ENCODE measurements at regions of chr16 and their contacts with region 1.

Region 1: DNA sequence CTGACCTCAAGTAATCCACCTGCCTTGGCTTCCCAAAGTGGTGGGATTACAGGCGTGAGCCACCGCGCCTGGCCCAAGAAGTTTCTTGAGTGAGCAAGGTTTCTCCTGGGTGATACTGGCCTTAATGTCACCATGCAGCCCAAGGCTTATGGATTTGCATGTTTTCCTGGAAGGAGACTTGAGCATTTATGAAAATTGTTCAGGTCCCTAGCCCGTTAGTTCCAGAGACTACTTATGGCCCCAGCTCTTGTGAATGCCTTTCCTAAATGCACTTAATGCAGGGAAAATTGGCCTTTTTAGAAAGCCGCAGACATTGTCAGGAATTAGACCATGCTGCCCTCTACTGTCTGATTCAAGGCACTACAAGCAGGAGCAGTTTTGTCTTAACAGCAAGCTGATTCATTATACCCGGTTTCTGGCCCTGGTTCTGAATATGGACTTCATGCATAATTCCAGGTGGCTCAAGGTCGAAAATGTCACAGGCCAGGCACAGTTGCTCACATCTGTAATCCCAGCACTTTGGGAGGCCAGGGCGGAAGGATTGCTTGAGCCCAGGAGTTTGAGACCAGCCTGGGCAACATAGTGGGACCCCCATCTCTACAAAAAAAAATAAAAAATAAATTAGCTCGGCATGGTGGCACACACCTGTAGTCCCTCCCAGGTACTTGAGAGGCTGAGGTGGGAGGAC is 91.3 kb downstream of the SNX29 start:
- DNase-seq: peak in 1 of 3 donors; percentile 18
- ATAC-seq: peak; percentile 90 to 97 (median 94)
- H3K4me3 ChIP-seq: no peak overlapping the region
- H3K27ac ChIP-seq: no peak overlapping the region
- H3K4me1 ChIP-seq: no peaks in the 10 kb centered on the region
- H3K27me3 ChIP-seq: no peaks in the 10 kb centered on the region
- CTCF ChIP-seq: peak; percentile 89 to 95 (median 92)
- POLR2A ChIP-seq: no peak

Region 2: DNA sequence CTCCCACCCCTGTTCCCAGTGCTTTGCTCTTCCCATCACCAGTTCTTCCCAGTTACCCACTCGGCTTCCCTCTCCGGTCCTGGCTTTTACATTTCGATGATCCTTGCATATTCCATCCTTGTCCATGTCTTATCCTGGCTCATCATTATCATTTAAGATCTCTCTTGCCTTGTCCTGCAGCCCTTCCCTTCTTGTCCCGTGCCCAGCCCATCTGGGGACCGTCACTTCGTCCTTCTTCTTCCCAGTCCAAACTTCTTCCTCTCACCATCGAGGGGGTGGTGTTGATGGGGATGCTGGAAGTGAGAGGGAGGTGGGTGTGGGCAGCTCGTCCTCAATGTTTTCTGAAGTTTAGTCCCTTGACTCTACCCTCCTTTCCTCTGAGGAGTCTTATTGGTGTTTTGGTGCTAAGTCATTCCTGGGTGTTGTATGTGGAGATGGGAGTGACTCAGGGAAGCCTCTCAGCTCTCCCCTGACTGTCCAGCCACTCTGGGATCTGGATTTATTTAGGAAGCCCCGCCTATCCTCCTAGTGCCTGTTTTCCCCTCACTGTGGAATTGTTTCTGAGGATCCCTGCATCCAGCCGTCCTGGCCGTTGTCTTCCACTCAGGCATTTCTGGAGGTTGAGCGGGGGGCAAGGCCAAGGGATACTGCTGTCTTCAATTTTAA is 90.3 kb before region 1 on chr16:
- intact Hi-C with region 1: loop called (anchors 10 kb)
- DNase-seq: no peak
- ATAC-seq: peak in 1 of 4 donors; percentile 10
- H3K4me3 ChIP-seq: peak overlapping the region; percentile 72 to 91 (median 74)
- H3K27ac ChIP-seq: no peak overlapping the region
- H3K4me1 ChIP-seq: peaks cover 0 to 11% (median 3%) of the 10 kb centered on the region in 4 donors
- H3K27me3 ChIP-seq: no peaks in the 10 kb centered on the region
- CTCF ChIP-seq: no peak
- POLR2A ChIP-seq: no peak

Measured in right lobe of liver (tissue), 6 donors.